HepG2 (cell line): ENCODE measurements at regions of chr12 and their contacts with region 1.

Region 1: GRCh38 chr12:116087962-116088361 is 189.5 kb downstream of the MED13L start:
- DNase-seq: peak; percentile 19
- ATAC-seq: peak; percentile 41; the same call in 1 of the 3 replicates
- H3K4me3 ChIP-seq: no peak overlapping the region
- H3K27ac ChIP-seq: no peak overlapping the region
- H3K4me1 ChIP-seq: peaks cover 30% of the 10 kb centered on the region
- H3K27me3 ChIP-seq: no peaks in the 10 kb centered on the region; a peak in 1 of 5 replicates
- CTCF ChIP-seq: no peak
- EP300 ChIP-seq: no peak
- POLR2A ChIP-seq: no peak
- RAD21 ChIP-seq: no peak

Region 2: GRCh38 chr12:116130431-116130830 is 42.5 kb after region 1 on chr12:
- CTCF ChIA-PET with region 1: no interaction called
- POLR2A ChIA-PET with region 1: no interaction called
- in situ Hi-C with region 1: no loop called
- intact Hi-C with region 1: loop called (anchors 5 kb)
- DNase-seq: no peak
- ATAC-seq: no peak
- H3K4me3 ChIP-seq: no peak overlapping the region
- H3K27ac ChIP-seq: no peak overlapping the region
- H3K4me1 ChIP-seq: peaks cover 66% of the 10 kb centered on the region
- H3K27me3 ChIP-seq: no peaks in the 10 kb centered on the region
- CTCF ChIP-seq: no peak
- EP300 ChIP-seq: no peak
- POLR2A ChIP-seq: no peak
- RAD21 ChIP-seq: no peak